Activated CD4-positive, alpha-beta memory T cell treated with anti-CD3 and anti-CD28 coated beads, Interleukin-2, amount 10 ng/mL, durations not matched to agents 7 days and 5 days (primary cell): ENCODE measurements at regions of chr1 and their contacts with region 1.

Region 1: GRCh38 chr1:145879775-145880174 is 5.9 kb downstream of the ANKRD35 start:
- DNase-seq: no peak
- H3K4me3 Mint-ChIP-seq: no peak overlapping the region
- H3K27ac Mint-ChIP-seq: no peak overlapping the region
- H3K4me1 Mint-ChIP-seq: peaks cover 8% of the 10 kb centered on the region
- H3K27me3 Mint-ChIP-seq: peaks cover 40% of the 10 kb centered on the region

Region 2: GRCh38 chr1:145891587-145892485 is 12.1 kb after region 1 on chr1:
- CTCF ChIA-PET with region 1: interaction called, 12 read pairs
- POLR2A ChIA-PET with region 1: interaction called, 3 read pairs
- DNase-seq: peak; percentile 66
- H3K4me3 Mint-ChIP-seq: no peak overlapping the region
- H3K27ac Mint-ChIP-seq: no peak overlapping the region
- H3K4me1 Mint-ChIP-seq: peaks cover under 1% of the 10 kb centered on the region
- H3K27me3 Mint-ChIP-seq: peaks cover 2% of the 10 kb centered on the region